ENCODE measurements at regions of chr7 and their contacts with region 1.

Region 1: DNA sequence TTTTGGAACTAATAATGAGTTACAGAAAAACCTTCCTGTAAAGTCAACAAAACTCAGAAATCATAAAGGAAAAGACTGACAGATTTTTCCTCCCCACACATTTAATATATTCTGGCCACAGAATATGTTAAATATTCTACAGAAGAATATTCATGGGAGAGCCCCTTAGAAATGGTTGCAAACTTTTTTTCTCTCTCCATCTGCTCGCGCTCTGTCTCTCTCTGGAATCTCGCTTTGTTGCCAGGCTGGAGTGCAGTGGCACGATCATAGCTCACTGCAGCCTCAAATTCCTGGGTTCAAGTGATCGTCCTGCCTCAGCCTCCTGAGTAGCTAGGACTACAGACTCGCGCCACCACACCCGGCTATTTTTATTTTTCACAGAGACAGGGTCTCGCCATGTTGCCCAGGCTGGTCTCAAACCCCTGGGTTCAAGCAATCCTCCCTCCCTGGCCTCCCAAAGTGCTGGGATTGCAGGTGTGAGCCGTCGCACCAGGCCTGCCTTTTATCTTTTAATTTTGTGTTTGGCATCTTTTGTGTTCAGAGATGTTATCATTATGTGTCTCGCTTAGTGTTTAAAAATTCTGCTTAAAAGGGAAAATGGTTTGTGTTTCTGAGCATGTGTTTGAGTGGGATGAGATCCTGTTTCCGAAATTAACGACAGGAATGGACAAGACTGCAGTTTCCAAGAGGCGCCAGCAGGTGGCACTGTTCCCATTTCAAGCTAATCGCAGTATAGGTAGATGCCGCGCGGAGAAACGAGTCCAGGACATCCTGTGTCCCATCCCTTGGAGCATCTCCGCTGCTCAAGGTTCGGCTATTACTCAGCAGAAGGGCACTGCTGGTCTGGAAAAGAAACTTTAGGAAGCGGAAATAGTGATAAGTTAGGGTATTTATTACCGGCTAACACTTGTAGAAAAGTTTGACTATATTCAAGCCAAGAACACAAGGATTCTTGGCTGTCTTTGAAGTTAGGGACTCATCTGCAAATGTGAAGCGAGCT is 23.1 kb upstream of the ST7 start:
- DNase-seq: peak; percentile 75
- H3K4me3 ChIP-seq: no peak overlapping the region
- H3K27ac ChIP-seq: no peak overlapping the region
- H3K4me1 ChIP-seq: no peaks in the 10 kb centered on the region
- CTCF ChIP-seq: peak; percentile 94

Region 2: GRCh38 chr7:116407165-116407564 is 523.0 kb before region 1 on chr7:
- CTCF ChIA-PET with region 1: no interaction called
- POLR2A ChIA-PET with region 1: no interaction called
- intact Hi-C with region 1: no loop called
- DNase-seq: no peak
- H3K4me3 ChIP-seq: no peak overlapping the region
- H3K27ac ChIP-seq: no peak overlapping the region
- H3K4me1 ChIP-seq: no peaks in the 10 kb centered on the region
- CTCF ChIP-seq: no peak

Region 3: GRCh38 chr7:116977172-116977571 is 47.0 kb after region 1 on chr7:
- CTCF ChIA-PET with region 1: no interaction called
- POLR2A ChIA-PET with region 1: no interaction called
- intact Hi-C with region 1: no loop called
- DNase-seq: no peak
- H3K4me3 ChIP-seq: no peak overlapping the region
- H3K27ac ChIP-seq: no peak overlapping the region
- H3K4me1 ChIP-seq: no peaks in the 10 kb centered on the region
- CTCF ChIP-seq: no peak

Region 4: GRCh38 chr7:117034851-117035464 is 104.7 kb after region 1 on chr7:
- CTCF ChIA-PET with region 1: no interaction called
- POLR2A ChIA-PET with region 1: no interaction called
- intact Hi-C with region 1: no loop called
- DNase-seq: no peak
- H3K4me3 ChIP-seq: no peak overlapping the region
- H3K27ac ChIP-seq: no peak overlapping the region
- H3K4me1 ChIP-seq: no peaks in the 10 kb centered on the region
- CTCF ChIP-seq: no peak

Region 5: DNA sequence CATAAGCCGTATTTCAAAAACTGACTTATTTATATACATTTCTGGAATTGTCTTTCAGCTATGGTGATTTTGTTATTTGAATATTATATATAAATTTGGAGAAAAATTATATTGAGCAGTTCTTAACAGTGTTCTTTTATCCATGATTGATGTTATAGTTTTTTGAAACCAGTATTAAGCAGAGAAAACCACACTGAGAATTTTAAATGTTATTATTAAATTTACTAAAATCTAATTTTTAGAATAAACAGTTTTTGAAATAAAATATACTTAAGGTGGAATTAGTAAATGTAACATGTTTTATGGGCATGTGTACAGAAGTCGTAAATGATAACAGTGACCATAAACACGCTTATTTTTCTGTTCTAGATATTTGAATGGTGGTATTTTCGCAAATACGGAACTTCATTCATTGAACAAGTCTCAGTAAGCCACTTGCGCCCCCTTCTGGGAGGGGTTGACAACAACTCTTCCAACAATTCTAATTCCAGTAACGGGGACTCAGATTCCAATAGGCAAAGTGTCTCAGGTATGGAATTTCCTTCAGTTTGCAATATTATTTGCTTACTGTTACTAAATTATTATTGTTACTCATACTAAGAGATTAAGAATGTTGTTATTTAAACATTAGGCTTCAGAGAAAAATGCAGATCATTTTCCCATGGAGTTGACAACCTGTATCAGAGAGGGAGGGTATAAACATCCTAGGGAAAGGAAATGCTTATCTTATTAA is 189.1 kb after region 1 on chr7:
- CTCF ChIA-PET with region 1: no interaction called
- POLR2A ChIA-PET with region 1: no interaction called
- intact Hi-C with region 1: loop called (anchors 1 kb)
- DNase-seq: peak; percentile 66
- H3K4me3 ChIP-seq: no peak overlapping the region
- H3K27ac ChIP-seq: no peak overlapping the region
- H3K4me1 ChIP-seq: no peaks in the 10 kb centered on the region
- CTCF ChIP-seq: peak; percentile 93

Region 6: GRCh38 chr7:117127585-117128168 is 197.5 kb after region 1 on chr7:
- CTCF ChIA-PET with region 1: no interaction called
- POLR2A ChIA-PET with region 1: no interaction called
- intact Hi-C with region 1: loop called (anchors 2 kb)
- DNase-seq: peak; percentile 54
- H3K4me3 ChIP-seq: no peak overlapping the region
- H3K27ac ChIP-seq: no peak overlapping the region
- H3K4me1 ChIP-seq: no peaks in the 10 kb centered on the region
- CTCF ChIP-seq: peak; percentile 89

Region 7: DNA sequence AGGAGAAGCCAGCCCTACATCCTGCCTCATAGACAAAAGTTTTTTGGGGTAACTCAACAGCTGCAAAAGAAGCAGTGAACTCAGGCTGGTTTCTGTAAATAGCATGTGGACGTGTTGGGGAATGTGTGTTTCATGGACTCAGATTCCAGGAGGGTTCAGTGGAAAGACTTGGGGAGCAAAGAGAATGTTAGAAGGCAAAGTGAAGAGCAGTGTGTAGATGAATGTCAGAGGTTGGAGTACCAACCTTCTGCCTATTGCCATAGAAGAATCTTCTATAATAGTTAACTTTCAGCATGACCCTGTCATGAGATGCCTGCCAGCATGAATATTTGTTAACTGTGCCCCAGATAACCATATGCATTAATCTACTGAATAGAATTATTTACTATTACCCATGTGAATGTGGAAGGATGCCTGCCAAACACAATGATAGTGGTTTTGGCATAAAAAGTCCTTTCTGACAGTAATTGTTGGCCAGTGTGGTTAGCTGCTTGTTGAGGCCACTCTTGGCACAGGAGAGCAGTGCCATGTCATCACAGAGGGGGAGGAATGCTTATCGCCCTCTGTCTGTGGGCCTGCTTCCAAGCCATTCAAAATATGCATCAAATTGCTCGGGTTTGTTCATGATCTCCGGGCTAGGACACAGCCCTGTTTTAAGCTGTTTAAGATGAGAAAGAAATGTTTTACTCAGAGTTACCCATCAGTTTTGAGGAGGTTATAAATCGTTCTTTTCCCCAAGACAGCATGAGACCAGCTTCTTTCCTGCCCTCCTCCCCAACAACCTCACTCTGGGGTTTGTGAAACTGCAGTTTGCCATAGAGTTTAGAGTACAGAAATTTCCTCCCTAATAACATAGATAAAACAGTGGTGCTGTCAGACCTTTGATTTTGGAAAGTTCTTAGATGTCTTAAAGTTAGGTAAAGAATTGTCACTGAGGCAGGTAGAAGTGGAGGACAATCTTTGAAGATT is 227.3 kb after region 1 on chr7:
- CTCF ChIA-PET with region 1: no interaction called
- POLR2A ChIA-PET with region 1: no interaction called
- intact Hi-C with region 1: no loop called
- DNase-seq: no peak
- H3K4me3 ChIP-seq: no peak overlapping the region
- H3K27ac ChIP-seq: no peak overlapping the region
- H3K4me1 ChIP-seq: no peaks in the 10 kb centered on the region
- CTCF ChIP-seq: 0 out of 2 replicates have a peak, but pooled peaks have one; percentile 12

Measured in OCI-LY7 (cell line).